ENCODE measurements at regions of chr2 and their contacts with region 1.

Region 1: GRCh38 chr2:69565431-69565839 is 78.1 kb downstream of the AAK1 start:
- DNase-seq: peak; percentile 82
- H3K4me3 Mint-ChIP-seq: no peak overlapping the region
- H3K27ac Mint-ChIP-seq: peak overlapping the region; percentile 41
- H3K4me1 Mint-ChIP-seq: peaks cover 87% of the 10 kb centered on the region
- H3K27me3 Mint-ChIP-seq: no peaks in the 10 kb centered on the region

Region 2: DNA sequence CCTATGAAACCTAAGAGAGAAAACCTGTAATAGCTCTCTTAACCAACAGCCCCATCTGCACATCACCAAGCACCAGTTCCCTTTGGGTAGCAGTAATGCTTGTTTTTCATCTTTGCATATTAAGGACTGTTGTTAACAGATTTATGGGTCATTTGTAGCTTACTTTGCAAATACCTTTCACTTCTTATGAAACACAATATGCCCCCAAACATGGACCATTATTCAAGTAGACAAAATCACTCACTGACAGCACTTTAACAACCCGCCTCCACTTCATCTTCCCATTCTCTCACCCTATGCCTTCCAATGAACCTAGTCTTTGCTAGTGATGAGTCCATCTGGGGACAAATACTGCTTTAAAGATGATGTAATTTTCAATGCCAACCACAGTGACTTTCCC is 242.8 kb before region 1 on chr2:
- CTCF ChIA-PET with region 1: no interaction called
- intact Hi-C with region 1: no loop called
- DNase-seq: no peak
- H3K4me3 Mint-ChIP-seq: no peak overlapping the region
- H3K27ac Mint-ChIP-seq: no peak overlapping the region
- H3K4me1 Mint-ChIP-seq: no peaks in the 10 kb centered on the region
- H3K27me3 Mint-ChIP-seq: no peaks in the 10 kb centered on the region

Region 3: DNA sequence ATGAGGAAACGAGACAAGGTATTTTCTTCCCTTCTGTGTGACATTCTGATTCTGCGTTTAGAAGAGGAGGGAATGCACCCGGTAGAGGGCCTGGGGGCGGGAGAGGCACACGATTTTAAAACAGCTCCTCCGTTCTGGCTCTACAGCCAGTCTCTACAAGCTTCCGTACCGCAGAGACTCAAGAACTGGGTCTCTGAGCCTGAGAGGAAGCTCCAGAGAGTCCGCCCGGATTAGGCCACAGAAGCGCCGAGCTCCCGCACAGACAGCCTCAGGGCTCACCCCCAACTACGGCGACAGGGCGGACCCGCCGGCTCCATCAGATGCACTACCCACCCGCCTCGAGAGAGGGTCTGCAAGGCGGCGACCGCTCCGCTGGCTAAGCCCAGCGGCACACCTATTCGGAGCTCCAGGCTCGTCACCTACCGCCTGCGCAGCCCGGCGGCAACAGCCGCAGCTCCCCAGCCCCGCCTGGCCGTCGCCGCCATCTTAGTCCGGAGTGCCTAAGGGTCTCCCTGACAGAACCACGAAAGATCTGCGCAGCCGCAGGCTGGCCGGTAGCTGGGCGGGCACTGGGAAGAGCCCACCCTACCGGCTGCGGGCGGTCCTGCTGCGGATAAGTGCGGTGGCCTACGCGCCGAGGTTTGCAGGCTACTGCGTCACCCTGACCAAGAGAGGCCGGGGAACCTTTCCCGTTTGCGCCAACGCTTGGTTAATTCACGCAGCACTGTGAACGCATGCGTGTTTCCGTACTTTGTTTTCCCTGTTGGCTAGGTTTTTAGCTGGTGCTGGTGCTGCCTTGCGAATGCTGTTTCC is 128.3 kb before region 1 on chr2 and contains the start of gene NFU1:
- CTCF ChIA-PET with region 1: interaction called, 13 read pairs
- intact Hi-C with region 1: loop called (anchors 2 kb)
- DNase-seq: peak; percentile 90
- H3K4me3 Mint-ChIP-seq: peak within 1 kb of the TSS; percentile 95
- H3K27ac Mint-ChIP-seq: peak within 1 kb of the TSS; percentile 94
- H3K4me1 Mint-ChIP-seq: peaks cover 29% of the 10 kb centered on the region
- H3K27me3 Mint-ChIP-seq: no peaks in the 10 kb centered on the region
- total RNA-seq, gene NFU1: 35.7 to 39.3 TPM

Region 4: DNA sequence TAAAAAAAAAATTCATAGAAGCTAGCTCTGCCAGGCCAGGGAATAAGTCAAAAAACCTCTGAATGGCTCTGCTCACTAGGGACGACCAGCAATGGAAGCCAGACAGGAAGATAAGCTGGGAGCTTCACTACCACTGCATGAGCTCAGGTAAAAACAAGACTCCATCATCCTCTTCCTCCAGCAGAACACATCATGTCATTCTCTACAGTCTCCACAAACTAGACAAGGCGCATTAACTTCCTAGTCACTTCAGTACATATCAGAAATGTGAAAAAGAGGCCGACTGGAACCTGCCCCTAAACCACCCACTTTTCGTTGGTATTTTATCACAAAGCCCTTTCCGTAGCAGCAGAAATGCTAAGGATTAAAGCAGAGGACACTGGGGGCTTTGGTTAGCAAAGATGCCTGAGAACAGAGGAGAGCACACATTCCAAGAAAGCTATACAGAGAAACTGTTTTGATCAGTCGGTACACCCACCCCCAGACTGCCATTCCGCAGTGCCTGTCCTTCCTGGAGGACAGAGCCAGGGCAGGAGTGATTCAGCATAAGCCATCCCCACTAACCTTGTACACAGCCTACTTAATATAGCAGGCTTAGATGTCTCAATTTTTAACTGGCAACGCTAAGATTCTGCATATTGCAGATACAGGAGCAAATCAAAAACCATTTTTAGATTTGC is 24.7 kb after region 1 on chr2:
- CTCF ChIA-PET with region 1: interaction called, 178 read pairs
- intact Hi-C with region 1: loop called (anchors 2 kb)
- DNase-seq: no peak
- H3K4me3 Mint-ChIP-seq: peak overlapping the region; percentile 1
- H3K27ac Mint-ChIP-seq: peak overlapping the region; percentile 68
- H3K4me1 Mint-ChIP-seq: peaks cover 79% of the 10 kb centered on the region
- H3K27me3 Mint-ChIP-seq: no peaks in the 10 kb centered on the region

Region 5: DNA sequence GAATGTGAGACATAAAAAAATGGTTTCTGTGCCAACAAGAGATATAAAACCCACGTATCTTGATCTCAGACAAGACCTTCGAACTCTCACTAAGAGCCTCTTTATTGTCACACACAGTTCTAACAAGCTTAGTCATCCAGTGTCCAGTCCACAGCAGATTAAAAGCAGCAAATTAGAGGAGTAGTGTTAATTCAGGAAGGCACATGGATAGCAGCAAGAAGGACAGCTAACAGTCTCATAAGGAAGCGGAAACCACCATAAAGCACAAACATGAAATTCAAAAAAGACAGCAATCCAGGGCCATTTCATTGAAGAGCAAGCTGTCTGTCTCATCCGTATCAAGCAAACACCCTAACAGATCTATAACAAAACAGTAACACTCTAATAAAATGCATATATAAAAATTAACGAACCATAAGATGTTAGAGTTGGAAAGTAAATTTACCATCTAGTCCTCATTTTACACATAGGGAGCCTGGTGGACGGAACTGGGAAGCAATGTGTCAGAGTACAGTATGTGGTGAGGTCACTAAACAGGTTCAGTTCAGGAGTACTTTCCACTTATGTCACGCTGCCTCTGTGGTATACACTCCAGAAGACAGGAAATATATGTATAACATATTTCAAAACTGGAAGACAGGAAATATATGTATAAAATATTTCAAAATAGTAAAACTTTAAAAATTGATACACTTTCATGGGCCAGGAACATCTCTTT is 59.8 kb after region 1 on chr2:
- CTCF ChIA-PET with region 1: interaction called, 27 read pairs
- intact Hi-C with region 1: no loop called
- DNase-seq: peak; percentile 45
- H3K4me3 Mint-ChIP-seq: no peak overlapping the region
- H3K27ac Mint-ChIP-seq: no peak overlapping the region
- H3K4me1 Mint-ChIP-seq: peaks cover 17% of the 10 kb centered on the region
- H3K27me3 Mint-ChIP-seq: no peaks in the 10 kb centered on the region

Region 6: DNA sequence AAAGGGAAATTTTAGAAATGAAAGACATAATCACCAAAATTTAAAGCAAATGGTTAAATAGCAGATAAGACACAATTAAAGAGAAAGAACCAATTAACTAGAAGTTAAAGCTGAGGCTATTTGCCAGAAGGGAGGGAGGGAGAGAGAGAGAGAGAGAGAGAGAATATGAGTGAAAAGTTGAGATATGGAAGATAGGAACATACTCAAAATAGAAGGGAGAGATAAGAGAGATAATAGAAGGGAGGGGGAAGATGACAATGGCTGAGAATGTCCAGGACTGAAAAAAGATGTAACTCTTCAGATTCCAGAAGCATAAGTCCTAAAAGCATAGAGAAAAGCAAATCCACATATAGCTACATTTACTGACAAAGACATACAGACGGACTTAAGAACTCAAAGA is 95.2 kb after region 1 on chr2:
- CTCF ChIA-PET with region 1: interaction called, 10 read pairs
- intact Hi-C with region 1: no loop called
- DNase-seq: no peak
- H3K4me3 Mint-ChIP-seq: no peak overlapping the region
- H3K27ac Mint-ChIP-seq: no peak overlapping the region
- H3K4me1 Mint-ChIP-seq: peaks cover 15% of the 10 kb centered on the region
- H3K27me3 Mint-ChIP-seq: no peaks in the 10 kb centered on the region

Region 7: DNA sequence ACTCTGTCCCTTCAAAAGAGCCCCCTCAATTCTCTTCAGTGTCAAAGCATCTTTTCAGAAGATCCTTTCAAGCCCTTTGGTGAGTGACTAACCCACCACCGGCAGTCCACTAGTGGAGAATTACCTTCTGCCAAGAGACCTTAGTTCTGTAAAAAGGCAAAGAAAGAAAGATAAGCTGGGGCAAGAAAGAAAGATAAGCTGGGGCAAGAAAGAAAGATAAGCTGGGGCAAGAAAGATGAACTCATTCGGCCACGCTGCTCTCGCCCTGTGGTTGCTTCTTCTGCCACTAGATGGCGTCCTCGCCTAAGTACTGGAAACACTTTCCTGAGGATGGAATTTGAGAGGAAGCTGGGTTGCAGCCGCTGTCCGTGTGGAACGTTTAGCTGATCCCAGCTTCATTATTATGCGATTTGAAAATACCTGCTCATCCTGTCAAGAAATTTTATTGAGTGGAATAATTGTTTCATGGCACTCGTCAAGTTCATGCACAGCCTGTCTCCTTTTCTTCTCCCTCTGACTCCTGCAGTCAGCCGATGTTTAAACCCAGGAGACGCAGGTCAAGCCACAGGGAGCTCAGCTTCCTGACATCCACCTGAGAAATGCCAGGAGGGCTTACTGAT is 159.2 kb after region 1 on chr2:
- CTCF ChIA-PET with region 1: interaction called, 27 read pairs
- intact Hi-C with region 1: no loop called
- DNase-seq: peak; percentile 95
- H3K4me3 Mint-ChIP-seq: peak overlapping the region; percentile 61
- H3K27ac Mint-ChIP-seq: no peak overlapping the region
- H3K4me1 Mint-ChIP-seq: no peaks in the 10 kb centered on the region
- H3K27me3 Mint-ChIP-seq: no peaks in the 10 kb centered on the region

Region 8: GRCh38 chr2:70643715-70644114 is 1078.3 kb after region 1 on chr2:
- CTCF ChIA-PET with region 1: no interaction called
- intact Hi-C with region 1: no loop called
- DNase-seq: peak; percentile 62
- H3K4me3 Mint-ChIP-seq: no peak overlapping the region
- H3K27ac Mint-ChIP-seq: no peak overlapping the region
- H3K4me1 Mint-ChIP-seq: peaks cover 16% of the 10 kb centered on the region
- H3K27me3 Mint-ChIP-seq: no peaks in the 10 kb centered on the region

Region 9: GRCh38 chr2:71060871-71061270 is 1495.4 kb after region 1 on chr2:
- CTCF ChIA-PET with region 1: no interaction called
- intact Hi-C with region 1: no loop called
- DNase-seq: no peak
- H3K4me3 Mint-ChIP-seq: no peak overlapping the region
- H3K27ac Mint-ChIP-seq: no peak overlapping the region
- H3K4me1 Mint-ChIP-seq: no peaks in the 10 kb centered on the region
- H3K27me3 Mint-ChIP-seq: peaks cover 4% of the 10 kb centered on the region